Panc1 (cell line): ENCODE measurements at regions of chr5 and their contacts with region 1.

Region 1: GRCh38 chr5:16234598-16234997 is 55.0 kb upstream of the MARCHF11 start:
- DNase-seq: no peak
- ATAC-seq: no peak
- H3K4me3 ChIP-seq: no peak overlapping the region
- H3K27ac ChIP-seq: no peak overlapping the region
- H3K4me1 ChIP-seq: no peaks in the 10 kb centered on the region
- H3K27me3 ChIP-seq: no peaks in the 10 kb centered on the region
- CTCF ChIP-seq: no peak; the same call in 1 of the 2 replicates

Region 2: DNA sequence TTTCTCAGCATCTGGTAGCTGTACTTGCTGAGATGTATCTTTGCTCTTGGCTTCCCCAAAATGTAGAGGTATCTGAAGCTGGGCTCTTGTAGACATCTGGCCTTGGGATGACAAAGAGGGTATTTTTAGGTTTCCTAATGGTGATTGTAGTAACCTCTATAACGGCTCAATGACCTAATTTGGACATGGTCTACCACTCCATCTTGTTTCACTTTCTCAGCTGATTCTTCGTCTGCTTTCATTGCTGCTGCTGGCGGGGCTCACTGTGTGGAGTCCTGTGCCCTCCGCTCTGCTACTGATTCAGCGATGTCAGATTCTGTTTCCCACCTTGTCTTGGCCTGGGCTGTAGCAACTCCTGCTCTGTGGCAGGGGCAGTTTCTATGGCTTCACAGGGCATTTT is 42.3 kb before region 1 on chr5:
- CTCF ChIA-PET with region 1: no interaction called
- POLR2A ChIA-PET with region 1: interaction called, 10 read pairs
- in situ Hi-C with region 1: no loop called
- intact Hi-C with region 1: no loop called
- DNase-seq: no peak
- ATAC-seq: no peak
- H3K4me3 ChIP-seq: no peak overlapping the region
- H3K27ac ChIP-seq: no peak overlapping the region
- H3K4me1 ChIP-seq: no peaks in the 10 kb centered on the region
- H3K27me3 ChIP-seq: no peaks in the 10 kb centered on the region
- CTCF ChIP-seq: no peak